Ascending aorta (tissue), 2 donors: ENCODE measurements at regions of chr3 and their contacts with region 1.

Region 1: GRCh38 chr3:70805061-70805759 is 492.8 kb upstream of the MDFIC2 start:
- DNase-seq: no peak
- H3K4me3 ChIP-seq: peak overlapping the region in 1 of 2 donors; percentile 39
- H3K27ac ChIP-seq: no peak overlapping the region
- H3K4me1 ChIP-seq: peaks cover 0 to 18% of the 10 kb centered on the region in 2 donors
- H3K27me3 ChIP-seq: no peaks in the 10 kb centered on the region
- CTCF ChIP-seq: no peak

Region 2: GRCh38 chr3:70840106-70840875 is 35.1 kb after region 1 on chr3:
- intact Hi-C with region 1: no loop called
- DNase-seq: no peak
- H3K4me3 ChIP-seq: no peak overlapping the region
- H3K27ac ChIP-seq: no peak overlapping the region
- H3K4me1 ChIP-seq: no peaks in the 10 kb centered on the region
- H3K27me3 ChIP-seq: no peaks in the 10 kb centered on the region
- CTCF ChIP-seq: no peak

Region 3: GRCh38 chr3:70889162-70890019 is 84.2 kb after region 1 on chr3:
- intact Hi-C with region 1: loop called (anchors 5 kb)
- DNase-seq: peak in 1 of 2 donors; percentile 78
- H3K4me3 ChIP-seq: no peak overlapping the region
- H3K27ac ChIP-seq: peak overlapping the region; percentile 78
- H3K4me1 ChIP-seq: peaks cover 3 to 17% of the 10 kb centered on the region in 2 donors
- H3K27me3 ChIP-seq: no peaks in the 10 kb centered on the region
- CTCF ChIP-seq: no peak